Common myeloid progenitor, CD34-positive (primary cell): ENCODE measurements at regions of chr2 and their contacts with region 1.

Region 1: DNA sequence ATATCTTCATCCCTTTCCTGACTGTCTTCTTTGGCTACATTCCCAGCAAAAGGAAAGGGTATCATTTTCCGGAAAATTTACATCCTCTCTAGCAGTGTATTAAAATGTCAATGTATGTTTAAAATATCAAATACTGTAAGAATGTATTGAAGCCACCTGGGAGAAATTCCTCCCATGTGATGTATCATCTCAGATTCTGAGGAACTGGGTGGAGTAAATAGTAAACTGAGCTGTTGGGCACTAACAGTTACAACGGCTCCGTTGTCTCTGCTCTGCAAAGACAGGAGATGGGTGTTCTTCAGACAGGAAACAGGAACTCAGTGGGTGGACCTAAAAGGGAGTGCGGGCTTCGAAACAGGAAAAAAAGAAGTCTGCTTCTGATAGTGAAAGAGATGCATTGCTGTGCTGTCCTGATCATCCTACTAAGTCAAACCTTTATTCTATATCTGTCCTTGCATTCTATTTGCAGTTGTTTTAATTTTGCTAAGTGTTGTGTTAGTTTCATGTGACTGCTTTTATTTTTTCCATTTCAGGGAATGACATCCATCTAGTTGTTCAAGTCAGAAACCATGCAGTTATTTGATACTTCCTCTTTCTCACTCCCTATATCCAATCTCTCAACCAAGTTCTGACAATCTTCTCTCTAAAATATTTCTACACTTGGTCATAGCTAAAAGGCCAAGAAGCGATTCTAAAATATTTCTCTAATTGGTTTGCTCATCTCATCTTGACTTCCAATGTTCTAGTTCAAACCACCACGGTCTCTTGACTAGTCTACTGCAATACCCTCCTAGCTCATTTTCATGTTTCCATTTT is 19.4 kb downstream of the DOK1 start:
- DNase-seq: peak; percentile 58 to 70 (median 59)
- H3K4me3 ChIP-seq: peak overlapping the region in 4 of 7 experiments; percentile 40 to 52 (median 50)
- H3K27ac ChIP-seq: peak overlapping the region in 1 of 2 experiments; percentile 32
- H3K4me1 ChIP-seq: peaks cover 44 to 89% (median 60%) of the 10 kb centered on the region in 4 experiments
- H3K27me3 ChIP-seq: no peaks in the 10 kb centered on the region

Region 2: DNA sequence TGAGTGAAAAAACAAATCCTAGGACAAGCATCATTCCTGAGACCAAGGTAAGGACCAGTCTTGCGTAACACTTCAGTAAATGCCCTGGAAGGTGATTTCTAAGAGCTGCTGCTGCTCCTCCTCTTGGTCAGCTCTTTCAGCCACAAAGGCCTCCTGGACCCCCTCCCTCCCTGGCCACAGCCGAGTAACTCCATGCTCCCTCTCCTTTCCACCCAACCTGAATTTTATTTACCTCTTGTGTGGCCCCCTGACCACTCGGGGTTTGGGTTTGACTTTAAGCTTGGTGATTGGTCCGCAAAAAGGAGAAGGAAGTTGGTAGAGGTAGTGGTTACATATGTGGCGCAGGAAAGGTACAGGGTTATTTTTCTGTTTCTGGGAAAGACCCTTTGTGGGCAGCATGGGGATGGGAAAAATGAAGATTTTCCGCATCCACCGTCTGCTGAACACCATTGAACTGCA is 35.0 kb before region 1 on chr2:
- CTCF ChIA-PET with region 1: interaction called, 55 read pairs
- POLR2A ChIA-PET with region 1: interaction called, 3 read pairs
- DNase-seq: peak in 2 of 3 donors; percentile 76 to 77
- H3K4me3 ChIP-seq: peak overlapping the region in 5 of 7 experiments; percentile 10 to 58 (median 44)
- H3K27ac ChIP-seq: no peak overlapping the region
- H3K4me1 ChIP-seq: peaks cover 19 to 53% (median 24%) of the 10 kb centered on the region in 4 experiments
- H3K27me3 ChIP-seq: no peaks in the 10 kb centered on the region

Region 3: DNA sequence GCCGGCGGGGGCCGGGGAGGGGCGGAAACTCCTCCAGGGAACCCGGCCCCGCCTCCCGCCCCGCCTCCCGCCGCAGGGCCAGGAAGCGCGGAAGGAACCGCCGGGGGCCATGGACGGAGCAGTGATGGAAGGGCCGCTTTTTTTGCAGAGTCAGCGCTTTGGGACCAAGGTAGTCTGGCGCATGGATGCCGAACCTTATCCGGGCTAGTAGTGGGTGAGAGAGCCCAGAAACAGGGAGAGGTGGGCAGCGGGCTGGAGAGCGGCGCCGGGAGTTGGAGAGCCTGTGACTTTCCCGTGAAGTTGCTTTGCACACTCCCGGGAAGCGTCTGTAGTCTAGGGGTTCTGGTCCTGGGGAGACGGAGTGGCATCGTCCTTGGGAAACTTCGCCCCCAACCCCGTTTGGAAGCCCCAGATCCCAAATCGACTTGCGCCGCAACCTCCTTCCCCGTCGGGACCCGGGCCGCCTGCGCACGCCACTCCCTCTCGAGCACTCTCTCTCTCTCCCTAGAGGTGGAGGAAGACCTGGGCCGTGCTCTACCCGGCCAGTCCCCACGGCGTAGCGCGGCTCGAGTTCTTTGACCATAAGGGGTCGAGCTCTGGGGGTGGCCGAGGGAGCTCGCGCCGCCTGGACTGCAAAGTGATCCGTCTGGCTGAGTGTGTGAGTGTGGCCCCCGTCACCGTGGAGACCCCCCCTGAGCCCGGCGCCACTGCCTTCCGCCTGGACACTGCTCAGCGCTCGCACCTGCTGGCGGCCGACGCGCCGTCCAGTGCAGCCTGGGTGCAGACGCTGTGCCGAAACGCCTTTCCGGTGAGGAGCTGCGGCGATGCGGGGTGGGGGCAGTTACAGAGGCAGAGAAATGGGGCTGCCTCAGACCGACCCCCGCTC is 19.1 kb before region 1 on chr2 and contains the start of gene DOK1:
- CTCF ChIA-PET with region 1: interaction called, 35 read pairs
- POLR2A ChIA-PET with region 1: no interaction called
- DNase-seq: peak in 2 of 3 donors; percentile 72 to 76
- H3K4me3 ChIP-seq: peak within 1 kb of the TSS; percentile 65 to 98 (median 93)
- H3K27ac ChIP-seq: peak within 1 kb of the TSS in 1 of 2 experiments; percentile 78
- H3K4me1 ChIP-seq: peaks cover 0 to 76% (median 38%) of the 10 kb centered on the region in 4 experiments
- H3K27me3 ChIP-seq: no peaks in the 10 kb centered on the region

Region 4: DNA sequence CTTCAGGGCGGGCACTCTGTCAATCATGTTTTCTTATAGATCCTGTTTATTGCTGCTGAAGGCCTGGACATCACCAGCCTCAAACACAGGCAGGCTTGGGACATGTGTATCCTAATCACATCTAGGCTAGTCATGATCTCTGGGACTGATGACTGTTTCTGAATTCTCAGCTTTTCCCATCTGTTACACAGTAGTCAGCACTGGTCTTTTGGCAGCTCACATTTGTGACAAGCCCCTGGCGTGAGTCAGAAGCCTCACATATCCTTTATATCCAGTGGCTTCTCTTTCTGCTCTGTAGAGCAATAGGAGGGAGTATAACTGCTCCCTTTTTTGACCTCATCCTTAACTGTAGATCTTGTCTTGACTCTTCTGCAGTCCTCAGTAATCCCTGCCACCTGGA is 84.6 kb after region 1 on chr2:
- CTCF ChIA-PET with region 1: no interaction called
- POLR2A ChIA-PET with region 1: no interaction called
- DNase-seq: no peak
- H3K4me3 ChIP-seq: no peak overlapping the region
- H3K27ac ChIP-seq: no peak overlapping the region
- H3K4me1 ChIP-seq: peaks cover 1 to 11% (median 8%) of the 10 kb centered on the region in 4 experiments
- H3K27me3 ChIP-seq: peaks cover 0 to 8% (median 0%) of the 10 kb centered on the region in 5 experiments